Activated naive CD4-positive, alpha-beta T cell treated with anti-CD3 and anti-CD28 coated beads for 36 hours (primary cell): ENCODE measurements at regions of chr5 and their contacts with region 1.

Region 1: GRCh38 chr5:140346348-140347101 is at the start of gene HBEGF:
- DNase-seq: peak; percentile 61
- H3K4me3 Mint-ChIP-seq: peak within 1 kb of the TSS; percentile 75
- H3K27ac Mint-ChIP-seq: peak within 1 kb of the TSS; percentile 41
- H3K4me1 Mint-ChIP-seq: peaks cover 41% of the 10 kb centered on the region
- H3K27me3 Mint-ChIP-seq: peaks cover 7% of the 10 kb centered on the region
- total RNA-seq, gene HBEGF: 8.7 to 9.1 TPM

Region 2: DNA sequence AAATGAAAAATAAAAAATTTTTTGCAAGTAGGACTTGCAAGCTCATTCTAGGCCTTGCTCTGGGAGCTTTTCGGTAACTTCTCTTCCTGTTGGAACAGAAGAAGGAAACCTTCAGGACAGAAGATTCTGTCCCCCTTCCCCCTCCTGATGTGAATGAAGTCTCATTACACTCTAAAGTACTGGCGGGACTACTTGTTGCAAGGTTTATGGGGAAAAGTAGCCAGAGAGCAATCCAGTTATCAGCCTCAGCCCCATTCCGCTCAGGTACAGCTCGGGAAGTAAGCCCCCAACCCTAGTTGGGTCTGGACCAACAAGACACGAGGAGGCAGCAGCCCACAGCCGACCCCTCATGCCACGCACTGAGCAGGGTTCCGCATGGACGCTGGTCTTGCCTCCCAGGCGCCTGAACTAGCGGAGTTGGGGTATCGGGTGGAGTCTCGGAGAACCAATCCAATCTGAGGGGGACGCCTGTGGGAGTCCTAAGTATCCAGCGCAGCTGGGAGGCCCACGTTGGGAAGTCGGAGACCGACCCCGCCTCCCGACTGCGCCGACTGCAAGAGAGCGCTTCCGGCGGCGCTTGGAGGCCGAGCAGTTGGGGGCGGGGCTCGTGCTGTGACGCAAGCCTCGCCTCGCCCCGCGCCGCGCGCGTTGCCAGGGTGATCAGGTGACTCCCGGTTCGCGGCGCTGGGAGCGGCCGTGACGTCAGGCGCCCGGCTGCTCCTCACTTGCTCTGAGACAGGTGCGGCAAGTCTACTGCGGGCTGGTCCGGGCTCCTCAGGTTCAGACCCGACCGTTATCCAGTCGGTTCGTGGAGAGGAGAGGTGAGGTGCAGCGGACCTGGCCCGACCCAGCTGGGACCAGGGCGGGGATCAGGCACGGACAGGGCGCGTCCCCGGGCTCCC is 171.8 kb before region 1 on chr5 and contains the start of gene CYSTM1:
- CTCF ChIA-PET with region 1: interaction called, 3 read pairs
- intact Hi-C with region 1: loop called (anchors 2 kb)
- DNase-seq: peak; percentile 97
- H3K4me3 Mint-ChIP-seq: peak within 1 kb of the TSS; percentile 92
- H3K27ac Mint-ChIP-seq: peak within 1 kb of the TSS; percentile 66
- H3K4me1 Mint-ChIP-seq: peaks cover 12% of the 10 kb centered on the region
- H3K27me3 Mint-ChIP-seq: peaks cover 2% of the 10 kb centered on the region
- total RNA-seq, gene CYSTM1: 22.3 to 25.1 TPM

Region 3: DNA sequence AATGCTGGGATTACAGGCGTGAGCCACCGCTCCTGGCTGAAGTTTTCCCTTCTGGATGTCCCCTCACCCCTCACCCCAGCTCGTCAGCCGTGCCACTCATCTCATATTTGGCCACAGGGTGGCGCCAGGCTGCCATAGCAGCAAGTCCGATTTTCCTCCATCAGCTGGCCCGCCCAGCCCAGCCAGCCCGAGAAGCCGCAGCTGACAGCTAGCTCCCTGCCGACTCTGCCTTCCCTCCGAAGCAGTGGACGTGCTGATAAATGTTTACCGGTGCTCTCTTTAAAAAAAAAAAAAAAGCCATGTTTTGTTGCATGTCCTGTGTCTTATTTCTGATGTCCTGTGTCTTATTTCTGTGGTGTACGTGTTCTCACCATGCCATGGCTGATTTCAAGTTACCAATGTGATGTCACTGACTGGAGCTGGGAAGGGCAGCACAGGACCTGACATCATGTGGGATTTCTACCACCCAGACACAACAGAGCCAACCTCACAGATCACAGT is 102.0 kb before region 1 on chr5:
- CTCF ChIA-PET with region 1: interaction called, 634 read pairs
- intact Hi-C with region 1: loop called (anchors 1 kb)
- DNase-seq: peak; percentile 91
- H3K4me3 Mint-ChIP-seq: no peak overlapping the region
- H3K27ac Mint-ChIP-seq: peak overlapping the region; percentile 65
- H3K4me1 Mint-ChIP-seq: peaks cover 27% of the 10 kb centered on the region
- H3K27me3 Mint-ChIP-seq: no peaks in the 10 kb centered on the region

Region 4: DNA sequence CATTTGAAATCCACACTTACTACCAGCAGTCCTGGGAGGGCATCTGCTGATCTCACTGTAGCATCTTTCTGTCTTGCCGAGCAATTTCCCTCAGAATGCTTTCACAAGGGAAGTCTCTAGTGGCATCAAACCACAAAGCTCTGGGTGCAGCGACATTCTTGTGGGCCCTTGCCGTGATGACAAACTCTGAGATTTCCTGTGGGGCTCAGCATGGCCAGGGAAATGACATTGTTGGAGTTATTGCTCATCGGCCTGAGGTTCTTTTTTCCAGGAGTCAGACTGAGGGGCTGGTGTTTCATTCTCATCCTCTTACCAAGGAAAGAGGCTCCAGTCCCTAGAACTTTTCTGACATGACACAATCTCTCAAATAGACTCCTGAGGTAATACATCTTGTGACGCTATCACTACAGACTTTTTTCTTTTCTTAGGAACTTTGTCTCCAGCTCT is 95.0 kb before region 1 on chr5:
- CTCF ChIA-PET with region 1: interaction called, 634 read pairs
- intact Hi-C with region 1: loop called (anchors 1 kb)
- DNase-seq: peak; percentile 87
- H3K4me3 Mint-ChIP-seq: no peak overlapping the region
- H3K27ac Mint-ChIP-seq: peak overlapping the region; percentile 68
- H3K4me1 Mint-ChIP-seq: peaks cover 33% of the 10 kb centered on the region
- H3K27me3 Mint-ChIP-seq: no peaks in the 10 kb centered on the region

Region 5: DNA sequence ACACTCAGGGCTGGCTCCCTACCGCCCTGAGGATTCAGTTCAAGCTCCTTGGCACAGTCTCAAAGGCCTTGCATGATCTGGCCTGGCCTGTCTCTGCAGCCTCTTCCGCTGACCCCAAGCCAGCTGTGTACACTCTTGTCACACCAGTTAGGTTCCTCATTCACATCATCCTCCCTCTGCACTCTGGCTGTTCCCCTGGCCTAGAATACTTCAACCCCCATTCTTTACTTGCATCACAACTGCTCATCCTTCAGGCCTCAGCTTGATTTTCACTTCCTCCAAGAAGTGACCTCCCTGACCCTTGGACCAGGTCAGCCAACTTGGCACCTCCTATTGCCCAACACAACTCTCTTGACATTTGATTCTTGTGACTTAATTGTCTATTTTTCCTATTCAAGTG is 24.7 kb before region 1 on chr5:
- CTCF ChIA-PET with region 1: interaction called, 10 read pairs
- intact Hi-C with region 1: no loop called
- DNase-seq: no peak
- H3K4me3 Mint-ChIP-seq: no peak overlapping the region
- H3K27ac Mint-ChIP-seq: no peak overlapping the region
- H3K4me1 Mint-ChIP-seq: peaks cover 7% of the 10 kb centered on the region
- H3K27me3 Mint-ChIP-seq: no peaks in the 10 kb centered on the region

Region 6: GRCh38 chr5:140336388-140336787 is 10.1 kb before region 1 on chr5:
- CTCF ChIA-PET with region 1: interaction called, 10 read pairs
- intact Hi-C with region 1: no loop called
- DNase-seq: no peak
- H3K4me3 Mint-ChIP-seq: no peak overlapping the region
- H3K27ac Mint-ChIP-seq: no peak overlapping the region
- H3K4me1 Mint-ChIP-seq: peaks cover 10% of the 10 kb centered on the region
- H3K27me3 Mint-ChIP-seq: no peaks in the 10 kb centered on the region

Region 7: GRCh38 chr5:141094481-141095262 is 748.1 kb after region 1 on chr5 and contains the start of gene PCDHB2:
- CTCF ChIA-PET with region 1: no interaction called
- intact Hi-C with region 1: no loop called
- DNase-seq: peak; percentile 26
- H3K4me3 Mint-ChIP-seq: peak within 1 kb of the TSS; percentile 28
- H3K27ac Mint-ChIP-seq: no peak within 1 kb of the TSS
- H3K4me1 Mint-ChIP-seq: no peaks in the 10 kb centered on the region
- H3K27me3 Mint-ChIP-seq: peaks cover 34% of the 10 kb centered on the region
- total RNA-seq, gene PCDHB2: not detected